Right ventricle myocardium inferior (tissue), 1 donor: ENCODE measurements at regions of chr1 and their contacts with region 1.

Region 1: DNA sequence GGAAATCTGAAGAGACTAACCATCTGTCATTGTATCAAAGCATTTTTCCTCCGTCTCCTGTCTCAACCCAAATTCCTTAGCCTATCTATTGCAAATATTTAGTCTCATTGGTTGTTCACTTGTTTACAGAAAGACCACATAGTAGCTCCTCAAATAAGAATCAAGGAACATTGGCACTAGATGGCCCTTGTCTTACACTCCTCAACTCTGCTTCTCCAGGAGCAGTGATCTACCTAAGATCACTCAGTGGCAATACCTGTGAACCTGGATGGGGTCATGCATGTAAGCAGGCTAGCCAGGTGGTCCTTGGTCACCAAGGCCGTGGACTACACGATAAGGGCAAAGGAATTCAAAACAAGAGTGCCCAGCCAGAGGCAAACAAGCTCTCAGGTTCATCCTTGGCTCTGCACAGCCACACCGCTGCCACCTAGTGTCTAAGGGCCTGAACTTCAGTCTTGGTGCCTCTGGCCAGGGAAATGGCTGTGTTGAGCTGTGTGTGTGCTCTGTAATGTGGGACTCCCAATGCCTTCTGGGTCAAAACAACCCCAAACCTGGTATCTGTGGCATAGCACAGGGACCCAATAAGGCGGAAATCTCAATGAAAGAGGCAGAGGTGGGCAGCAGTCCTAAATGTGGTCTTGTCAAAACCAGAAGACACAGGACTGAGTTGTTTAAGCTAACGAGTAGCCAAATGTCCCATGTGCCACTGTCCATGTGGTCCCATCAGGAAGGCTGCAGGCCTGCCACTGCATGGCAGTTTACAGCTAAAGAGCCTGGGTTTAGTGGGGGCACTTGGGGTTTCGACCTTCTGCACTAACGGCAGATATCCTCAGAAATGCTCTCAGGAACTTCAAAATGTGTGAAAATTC is 54.5 kb downstream of the GPR161 start:
- DNase-seq: peak; percentile 76
- ATAC-seq: peak; percentile 52

Region 2: GRCh38 chr1:167797015-167797414 is 285.2 kb before region 1 on chr1:
- intact Hi-C with region 1: loop called (anchors 10 kb)
- DNase-seq: peak; percentile 79
- ATAC-seq: peak; percentile 96

Region 3: GRCh38 chr1:168136709-168137514 is 54.7 kb after region 1 on chr1 and contains the start of gene GPR161:
- intact Hi-C with region 1: loop called (anchors 2 kb)
- DNase-seq: peak; percentile 82
- ATAC-seq: peak; percentile 68
- total RNA-seq, gene GPR161: 3.0 TPM